ENCODE measurements at regions of chr11 and their contacts with region 1.

Region 1: GRCh38 chr11:1876361-1877063 is 15.2 kb downstream of the PRR33 start:
- DNase-seq: peak; percentile 48 to 80
- ATAC-seq: peak; percentile 57 to 79; a peak in 4 of 6 replicates
- H3K4me3 ChIP-seq: no peak overlapping the region
- H3K27ac ChIP-seq: peak overlapping the region in 1 of 2 experiments; percentile 65; a peak in 3 of 6 replicates
- H3K4me1 ChIP-seq: peaks cover 19% of the 10 kb centered on the region; the same call in 2 of the 3 replicates
- CTCF ChIP-seq: peak; percentile 61
- EP300 ChIP-seq: no peak
- POLR2A ChIP-seq: no peak
- RAD21 ChIP-seq: peak; percentile 40 to 44; a peak in 4 of 5 replicates

Region 2: DNA sequence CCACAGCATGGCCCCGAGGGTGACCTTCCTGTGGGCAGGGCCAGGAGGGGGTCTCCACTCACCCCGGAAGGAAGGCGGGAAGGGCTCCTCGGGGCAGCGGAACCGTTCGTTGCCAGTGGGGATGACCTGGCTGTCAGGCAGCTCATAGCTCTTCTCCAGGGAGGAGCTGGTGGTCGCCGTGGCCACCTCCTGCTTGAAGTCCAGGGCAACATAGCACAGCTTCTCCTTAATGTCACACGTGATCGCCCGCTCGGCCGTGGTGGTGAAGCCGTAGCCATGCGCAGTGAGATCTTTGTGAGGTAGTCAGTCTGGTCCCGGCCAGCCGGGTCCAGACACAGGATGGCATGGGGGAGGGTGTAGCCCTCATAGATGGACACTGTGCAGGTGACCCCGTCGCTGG is 73.3 kb before region 1 on chr11:
- CTCF ChIA-PET with region 1: no interaction called
- POLR2A ChIA-PET with region 1: no interaction called
- DNase-seq: no peak
- ATAC-seq: no peak
- H3K4me3 ChIP-seq: no peak overlapping the region
- H3K27ac ChIP-seq: no peak overlapping the region
- H3K4me1 ChIP-seq: no peaks in the 10 kb centered on the region
- CTCF ChIP-seq: no peak
- EP300 ChIP-seq: no peak
- POLR2A ChIP-seq: no peak
- RAD21 ChIP-seq: no peak

Region 3: GRCh38 chr11:1837171-1838076 is 39.1 kb before region 1 on chr11:
- CTCF ChIA-PET with region 1: interaction called, 36 read pairs
- POLR2A ChIA-PET with region 1: no interaction called
- DNase-seq: peak; percentile 59 to 70
- ATAC-seq: peak; percentile 46 to 87
- H3K4me3 ChIP-seq: no peak overlapping the region
- H3K27ac ChIP-seq: peak overlapping the region in 1 of 2 experiments; percentile 73; a peak in 3 of 6 replicates
- H3K4me1 ChIP-seq: peaks cover 24% of the 10 kb centered on the region
- CTCF ChIP-seq: peak; percentile 89
- EP300 ChIP-seq: no peak
- POLR2A ChIP-seq: no peak
- RAD21 ChIP-seq: peak; percentile 93 to 97

Region 4: GRCh38 chr11:1864831-1865665 is 11.5 kb before region 1 on chr11:
- CTCF ChIA-PET with region 1: interaction called, 35 read pairs
- POLR2A ChIA-PET with region 1: no interaction called
- DNase-seq: no peak
- ATAC-seq: peak in 1 of 2 experiments; percentile 15; a peak in 2 of 6 replicates
- H3K4me3 ChIP-seq: no peak overlapping the region
- H3K27ac ChIP-seq: peak overlapping the region; percentile 87 to 94
- H3K4me1 ChIP-seq: peaks cover 42% of the 10 kb centered on the region
- CTCF ChIP-seq: no peak
- EP300 ChIP-seq: no peak
- POLR2A ChIP-seq: no peak
- RAD21 ChIP-seq: no peak

Region 5: DNA sequence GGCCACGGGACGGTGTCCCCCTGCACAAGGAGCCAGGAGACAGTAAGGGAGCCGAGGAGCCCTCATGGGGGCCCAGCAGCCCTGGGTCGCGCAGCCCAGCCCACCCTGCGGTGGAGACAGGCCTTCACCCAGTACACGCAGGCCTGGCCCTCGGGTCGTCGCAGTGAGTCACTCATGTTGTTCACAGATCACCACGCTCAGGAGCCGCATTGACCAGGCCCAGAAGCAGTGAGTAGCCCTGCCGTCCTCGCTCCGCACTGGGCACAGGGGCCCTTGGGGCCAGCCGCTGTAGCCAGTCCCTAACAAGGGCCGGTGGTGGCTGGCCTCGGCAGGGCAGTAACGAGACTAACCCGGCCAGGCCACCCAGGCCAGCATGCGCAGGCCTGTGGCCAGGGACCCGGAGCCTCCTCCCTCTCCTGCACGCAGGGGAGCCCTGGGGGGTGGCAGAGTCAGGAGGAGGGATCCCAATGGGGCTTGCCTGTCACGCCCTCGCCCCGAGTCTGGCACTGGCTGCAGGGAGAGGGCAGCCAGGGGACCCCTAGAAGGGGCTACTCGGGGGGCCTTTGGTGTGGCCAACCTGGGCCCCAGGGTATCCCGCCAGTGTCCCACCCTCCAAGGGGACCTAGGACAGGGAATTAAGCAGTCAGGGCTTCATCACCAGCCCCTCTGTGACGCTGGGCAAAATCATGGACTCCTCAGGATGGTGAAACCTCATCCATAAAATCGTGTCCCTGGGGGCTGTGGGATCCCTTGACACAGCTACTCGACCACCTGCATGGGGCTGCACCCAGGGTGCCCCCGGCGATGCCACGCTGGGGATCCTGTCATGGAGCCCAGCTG is 60.5 kb after region 1 on chr11:
- CTCF ChIA-PET with region 1: interaction called, 11 read pairs
- POLR2A ChIA-PET with region 1: no interaction called
- DNase-seq: no peak
- ATAC-seq: peak; percentile 29 to 40; a peak in 3 of 6 replicates
- H3K4me3 ChIP-seq: no peak overlapping the region
- H3K27ac ChIP-seq: no peak overlapping the region
- H3K4me1 ChIP-seq: no peaks in the 10 kb centered on the region
- CTCF ChIP-seq: no peak
- EP300 ChIP-seq: no peak
- POLR2A ChIP-seq: no peak
- RAD21 ChIP-seq: no peak

Region 6: GRCh38 chr11:1953489-1954266 is 77.2 kb after region 1 on chr11:
- CTCF ChIA-PET with region 1: interaction called, 49 read pairs
- POLR2A ChIA-PET with region 1: no interaction called
- DNase-seq: no peak
- ATAC-seq: peak; percentile 86 to 95
- H3K4me3 ChIP-seq: no peak overlapping the region
- H3K27ac ChIP-seq: no peak overlapping the region
- H3K4me1 ChIP-seq: no peaks in the 10 kb centered on the region
- CTCF ChIP-seq: peak; percentile 22; the same call in 2 of the 3 replicates
- EP300 ChIP-seq: no peak
- POLR2A ChIP-seq: no peak
- RAD21 ChIP-seq: no peak